ENCODE measurements at regions of chr16 and their contacts with region 1.

Region 1: GRCh38 chr16:29700253-29700987 is 21.4 kb downstream of the QPRT start:
- DNase-seq: peak; percentile 78
- ATAC-seq: peak; percentile 20
- H3K4me3 Mint-ChIP-seq: peak overlapping the region; percentile 62
- H3K27ac Mint-ChIP-seq: peak overlapping the region; percentile 75
- H3K4me1 Mint-ChIP-seq: peaks cover 29% of the 10 kb centered on the region
- H3K27me3 Mint-ChIP-seq: no peaks in the 10 kb centered on the region

Region 2: GRCh38 chr16:29745853-29746345 is 45.5 kb after region 1 on chr16 and contains the start of gene C16orf54:
- POLR2A ChIA-PET with region 1: interaction called, 13 read pairs
- DNase-seq: peak; percentile 88
- ATAC-seq: peak; percentile 81
- H3K4me3 Mint-ChIP-seq: peak within 1 kb of the TSS; percentile 98
- H3K27ac Mint-ChIP-seq: peak within 1 kb of the TSS; percentile 98
- H3K4me1 Mint-ChIP-seq: peaks cover 38% of the 10 kb centered on the region
- H3K27me3 Mint-ChIP-seq: no peaks in the 10 kb centered on the region
- total RNA-seq, gene C16orf54: 84.2 to 88.0 TPM

Region 3: GRCh38 chr16:29775742-29776408 is 75.5 kb after region 1 on chr16:
- POLR2A ChIA-PET with region 1: no interaction called
- DNase-seq: no peak
- ATAC-seq: no peak
- H3K4me3 Mint-ChIP-seq: no peak overlapping the region
- H3K27ac Mint-ChIP-seq: no peak overlapping the region
- H3K4me1 Mint-ChIP-seq: peaks cover 2% of the 10 kb centered on the region
- H3K27me3 Mint-ChIP-seq: peaks cover 6% of the 10 kb centered on the region

Region 4: GRCh38 chr16:29815793-29816693 is 115.6 kb after region 1 on chr16 and contains the start of gene PAGR1:
- POLR2A ChIA-PET with region 1: interaction called, 18 read pairs
- DNase-seq: peak; percentile 96
- ATAC-seq: peak; percentile 78
- H3K4me3 Mint-ChIP-seq: peak within 1 kb of the TSS; percentile 93
- H3K27ac Mint-ChIP-seq: peak within 1 kb of the TSS; percentile 96
- H3K4me1 Mint-ChIP-seq: peaks cover 39% of the 10 kb centered on the region
- H3K27me3 Mint-ChIP-seq: peaks cover 12% of the 10 kb centered on the region
- total RNA-seq, gene PAGR1: 29.8 to 34.3 TPM

Region 5: DNA sequence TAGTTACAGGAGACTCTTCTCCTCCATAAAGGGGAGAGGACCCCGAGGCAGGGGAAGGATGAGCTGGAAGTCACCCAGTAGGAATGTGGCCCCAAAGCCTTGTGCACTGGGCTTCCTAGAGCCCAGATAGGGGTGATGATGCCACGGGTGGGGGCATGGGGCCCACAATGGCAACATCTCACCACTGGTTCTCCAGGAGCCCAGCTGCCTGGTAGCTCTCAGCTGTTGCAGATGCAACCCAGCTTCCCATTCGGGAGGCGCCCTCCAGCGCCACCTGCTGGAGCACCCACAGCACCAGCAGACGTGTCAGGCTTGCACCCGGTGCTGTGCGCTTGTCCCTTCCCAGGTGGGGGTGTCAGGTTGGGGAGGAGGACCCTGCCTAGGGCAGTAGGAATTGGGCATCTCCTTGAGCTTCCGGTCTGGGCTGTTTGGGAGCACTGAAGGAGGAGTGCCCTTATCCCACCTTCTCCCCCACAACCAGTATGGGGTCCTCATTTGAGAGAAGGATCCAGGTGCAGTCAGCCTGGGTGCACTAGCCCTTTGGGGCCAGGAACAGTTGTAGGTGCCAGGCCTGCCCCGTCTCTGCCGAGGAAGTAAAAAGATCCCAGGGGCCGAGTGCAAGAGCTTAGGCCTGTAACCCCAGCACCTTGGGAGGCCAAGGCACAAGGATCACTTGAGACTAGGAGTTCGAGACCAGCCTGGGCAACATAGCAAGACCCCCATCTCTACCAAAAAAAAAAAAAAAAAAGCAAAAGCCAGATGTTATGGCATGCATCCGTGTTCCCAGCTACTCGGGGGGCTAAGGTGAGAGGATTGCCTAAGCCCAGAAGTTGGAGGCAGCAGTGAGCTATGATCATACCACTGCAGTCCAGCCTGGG is 148.2 kb after region 1 on chr16:
- POLR2A ChIA-PET with region 1: interaction called, 13 read pairs
- DNase-seq: peak; percentile 89
- ATAC-seq: peak; percentile 92
- H3K4me3 Mint-ChIP-seq: no peak overlapping the region
- H3K27ac Mint-ChIP-seq: no peak overlapping the region
- H3K4me1 Mint-ChIP-seq: peaks cover 4% of the 10 kb centered on the region
- H3K27me3 Mint-ChIP-seq: no peaks in the 10 kb centered on the region

Measured in activated naive CD8-positive, alpha-beta T cell treated with anti-CD3 and anti-CD28 coated beads, Interleukin-2, amount 10 ng/mL, durations not matched to agents 7 days and 5 days (primary cell).